ENCODE measurements at regions of chr9 and their contacts with region 1.

Region 1: GRCh38 chr9:29830821-29831220 is 2257.5 kb upstream of the C9orf72 start:
- DNase-seq: peak; percentile 36 to 40
- H3K4me3 ChIP-seq: no peak overlapping the region
- H3K4me3 Mint-ChIP-seq: no peak overlapping the region
- H3K27ac Mint-ChIP-seq: no peak overlapping the region
- H3K4me1 ChIP-seq: no peaks in the 10 kb centered on the region
- H3K4me1 Mint-ChIP-seq: no peaks in the 10 kb centered on the region
- H3K27me3 ChIP-seq: no peaks in the 10 kb centered on the region
- H3K27me3 Mint-ChIP-seq: no peaks in the 10 kb centered on the region
- CTCF ChIP-seq: peak; percentile 29 to 41

Region 2: DNA sequence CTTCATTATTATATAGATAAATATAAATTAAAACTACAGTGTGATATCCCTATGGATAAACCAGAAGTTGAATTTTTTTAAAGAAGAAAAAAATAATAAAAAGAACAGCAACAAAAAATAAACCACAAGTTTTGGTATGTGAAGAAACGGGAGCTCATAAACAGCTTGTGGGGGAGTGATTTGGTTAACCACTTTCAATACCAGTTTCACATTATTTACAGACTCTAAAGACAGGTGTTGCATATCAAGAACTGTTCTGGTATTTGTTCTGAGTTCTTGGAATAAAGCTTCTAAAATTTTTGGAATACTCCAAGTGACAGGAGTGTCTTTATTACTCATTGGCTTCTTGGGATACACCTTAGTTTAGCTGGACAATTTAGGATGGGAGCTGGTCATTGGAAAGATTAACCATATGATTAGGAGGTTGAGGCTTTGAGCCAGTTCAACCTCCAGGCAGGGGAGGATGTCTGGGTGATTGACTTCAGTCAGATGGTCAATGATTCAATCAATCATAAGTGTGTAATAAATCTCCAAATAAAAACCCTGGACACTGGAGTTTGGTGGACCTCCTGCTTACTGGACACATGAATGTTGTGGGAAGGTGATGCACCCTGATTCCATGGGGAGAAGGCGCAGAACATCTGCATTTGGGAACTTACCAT is 34.4 kb before region 1 on chr9:
- CTCF ChIA-PET with region 1: no interaction called
- POLR2A ChIA-PET with region 1: no interaction called
- intact Hi-C with region 1: no loop called
- DNase-seq: no peak
- H3K4me3 ChIP-seq: no peak overlapping the region
- H3K4me3 Mint-ChIP-seq: no peak overlapping the region
- H3K27ac Mint-ChIP-seq: no peak overlapping the region
- H3K4me1 ChIP-seq: no peaks in the 10 kb centered on the region
- H3K4me1 Mint-ChIP-seq: no peaks in the 10 kb centered on the region
- H3K27me3 ChIP-seq: no peaks in the 10 kb centered on the region
- H3K27me3 Mint-ChIP-seq: no peaks in the 10 kb centered on the region
- CTCF ChIP-seq: no peak

Region 3: DNA sequence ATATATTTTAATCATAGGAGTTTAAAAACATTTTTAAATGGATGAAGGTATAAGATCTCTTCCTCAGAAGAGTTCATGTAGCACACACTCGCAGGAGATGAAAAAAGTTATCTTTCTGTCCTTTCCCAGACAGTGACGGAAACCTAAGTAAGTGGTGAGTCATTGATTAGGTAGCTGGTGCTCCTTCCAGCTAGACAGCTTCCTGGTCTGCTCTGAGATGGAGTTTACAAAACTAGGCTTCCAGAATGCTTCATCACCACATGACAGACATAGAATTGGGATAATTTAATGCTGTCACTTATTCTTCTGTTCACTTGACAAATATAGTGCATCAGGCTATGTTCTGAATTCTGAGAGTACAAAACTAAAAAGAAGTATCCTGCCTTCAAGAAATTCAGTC is 135.4 kb after region 1 on chr9:
- CTCF ChIA-PET with region 1: no interaction called
- POLR2A ChIA-PET with region 1: no interaction called
- intact Hi-C with region 1: loop called (anchors 10 kb)
- DNase-seq: no peak
- H3K4me3 ChIP-seq: no peak overlapping the region
- H3K4me3 Mint-ChIP-seq: no peak overlapping the region
- H3K27ac Mint-ChIP-seq: no peak overlapping the region
- H3K4me1 ChIP-seq: no peaks in the 10 kb centered on the region
- H3K4me1 Mint-ChIP-seq: no peaks in the 10 kb centered on the region
- H3K27me3 ChIP-seq: no peaks in the 10 kb centered on the region
- H3K27me3 Mint-ChIP-seq: no peaks in the 10 kb centered on the region
- CTCF ChIP-seq: no peak

Measured in Caco-2 (cell line).